Activated CD8-positive, alpha-beta T cell treated with anti-CD3 and anti-CD28 coated beads, Interleukin-2, amount 10 ng/mL, durations not matched to agents 7 days and 5 days (primary cell): ENCODE measurements at regions of chr2 and their contacts with region 1.

Region 1: GRCh38 chr2:219543601-219544358 is at the starts of genes CHPF and TMEM198:
- DNase-seq: peak; percentile 95
- ATAC-seq: peak; percentile 71
- H3K4me3 Mint-ChIP-seq: peak within 1 kb of the TSS; percentile 73
- H3K27ac Mint-ChIP-seq: peak within 1 kb of the TSS; percentile 78
- H3K4me1 Mint-ChIP-seq: peaks cover 25% of the 10 kb centered on the region
- H3K27me3 Mint-ChIP-seq: peaks cover 24% of the 10 kb centered on the region
- total RNA-seq, gene CHPF: 7.1 to 7.3 TPM
- total RNA-seq, gene TMEM198: 0.47 to 0.60 TPM

Region 2: GRCh38 chr2:219388127-219388844 is 155.5 kb before region 1 on chr2:
- CTCF ChIA-PET with region 1: interaction called, 14 read pairs
- POLR2A ChIA-PET with region 1: no interaction called
- DNase-seq: peak; percentile 99
- ATAC-seq: peak; percentile 77
- H3K4me3 Mint-ChIP-seq: peak overlapping the region; percentile 70
- H3K27ac Mint-ChIP-seq: peak overlapping the region; percentile 87
- H3K4me1 Mint-ChIP-seq: peaks cover 18% of the 10 kb centered on the region
- H3K27me3 Mint-ChIP-seq: peaks cover 5% of the 10 kb centered on the region

Region 3: GRCh38 chr2:219560037-219560892 is 16.5 kb after region 1 on chr2:
- CTCF ChIA-PET with region 1: interaction called, 21 read pairs
- POLR2A ChIA-PET with region 1: no interaction called
- DNase-seq: no peak
- ATAC-seq: peak; percentile 16
- H3K4me3 Mint-ChIP-seq: no peak overlapping the region
- H3K27ac Mint-ChIP-seq: no peak overlapping the region
- H3K4me1 Mint-ChIP-seq: no peaks in the 10 kb centered on the region
- H3K27me3 Mint-ChIP-seq: no peaks in the 10 kb centered on the region

Region 4: GRCh38 chr2:219597552-219598307 is 54.0 kb after region 1 on chr2 and contains the start of gene STK11IP:
- CTCF ChIA-PET with region 1: interaction called, 22 read pairs
- POLR2A ChIA-PET with region 1: interaction called, 4 read pairs
- DNase-seq: peak; percentile 96
- ATAC-seq: peak; percentile 92
- H3K4me3 Mint-ChIP-seq: peak within 1 kb of the TSS; percentile 94
- H3K27ac Mint-ChIP-seq: peak within 1 kb of the TSS; percentile 89
- H3K4me1 Mint-ChIP-seq: peaks cover 32% of the 10 kb centered on the region
- H3K27me3 Mint-ChIP-seq: peaks cover 9% of the 10 kb centered on the region
- total RNA-seq, gene STK11IP: 30.0 to 33.1 TPM

Region 5: GRCh38 chr2:219642465-219643080 is 98.8 kb after region 1 on chr2:
- CTCF ChIA-PET with region 1: interaction called, 59 read pairs
- POLR2A ChIA-PET with region 1: no interaction called
- DNase-seq: peak; percentile 95
- ATAC-seq: peak; percentile 98
- H3K4me3 Mint-ChIP-seq: no peak overlapping the region
- H3K27ac Mint-ChIP-seq: no peak overlapping the region
- H3K4me1 Mint-ChIP-seq: peaks cover 16% of the 10 kb centered on the region
- H3K27me3 Mint-ChIP-seq: peaks cover 7% of the 10 kb centered on the region

Region 6: GRCh38 chr2:219689676-219690628 is 146.2 kb after region 1 on chr2:
- CTCF ChIA-PET with region 1: interaction called, 10 read pairs
- POLR2A ChIA-PET with region 1: no interaction called
- DNase-seq: peak; percentile 67
- ATAC-seq: peak; percentile 52
- H3K4me3 Mint-ChIP-seq: no peak overlapping the region
- H3K27ac Mint-ChIP-seq: no peak overlapping the region
- H3K4me1 Mint-ChIP-seq: peaks cover 10% of the 10 kb centered on the region
- H3K27me3 Mint-ChIP-seq: peaks cover 11% of the 10 kb centered on the region